Activated CD4-positive, alpha-beta T cell treated with anti-CD3 and anti-CD28 coated beads, Interleukin-2, amount 10 ng/mL, durations not matched to agents 7 days and 5 days (primary cell): ENCODE measurements at regions of chr6 and their contacts with region 1.

Region 1: GRCh38 chr6:112180095-112180820 is 74.1 kb downstream of the LAMA4 start:
- DNase-seq: peak; percentile 81
- H3K4me3 Mint-ChIP-seq: no peak overlapping the region
- H3K27ac Mint-ChIP-seq: no peak overlapping the region
- H3K4me1 Mint-ChIP-seq: no peaks in the 10 kb centered on the region
- H3K27me3 Mint-ChIP-seq: peaks cover 40% of the 10 kb centered on the region

Region 2: DNA sequence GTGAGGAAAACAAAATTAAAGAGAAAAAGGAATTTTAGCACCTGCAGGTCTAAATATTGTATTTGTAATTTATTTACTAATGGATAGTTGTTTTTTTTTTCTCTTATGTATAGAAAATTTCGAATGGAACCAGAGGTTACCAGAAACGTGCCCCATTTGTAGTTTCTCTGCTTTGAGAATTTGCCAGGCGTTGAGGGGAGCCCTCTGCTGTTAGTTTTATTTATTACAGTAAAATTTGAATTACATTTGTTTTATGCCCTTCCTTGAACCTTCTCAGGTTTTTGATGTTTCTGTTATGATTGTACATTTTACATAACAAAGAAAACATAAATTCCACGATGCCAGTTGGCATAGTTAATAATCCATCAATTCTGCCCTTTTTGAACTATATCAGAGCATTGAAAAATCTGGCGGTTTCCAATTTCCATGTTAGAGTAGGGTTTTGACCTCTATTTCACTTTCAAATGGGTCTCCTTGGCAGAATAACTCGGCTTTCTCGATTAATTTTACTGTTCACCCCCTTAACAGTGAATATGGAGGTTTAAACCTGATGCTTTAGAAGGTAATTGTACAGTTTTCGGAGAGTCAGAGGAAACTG is 131.8 kb after region 1 on chr6:
- CTCF ChIA-PET with region 1: interaction called, 11 read pairs
- POLR2A ChIA-PET with region 1: interaction called, 9 read pairs
- DNase-seq: no peak
- H3K4me3 Mint-ChIP-seq: no peak overlapping the region
- H3K27ac Mint-ChIP-seq: no peak overlapping the region
- H3K4me1 Mint-ChIP-seq: no peaks in the 10 kb centered on the region
- H3K27me3 Mint-ChIP-seq: peaks cover 32% of the 10 kb centered on the region